ENCODE measurements at regions of chrX and their contacts with region 1.

Region 1: DNA sequence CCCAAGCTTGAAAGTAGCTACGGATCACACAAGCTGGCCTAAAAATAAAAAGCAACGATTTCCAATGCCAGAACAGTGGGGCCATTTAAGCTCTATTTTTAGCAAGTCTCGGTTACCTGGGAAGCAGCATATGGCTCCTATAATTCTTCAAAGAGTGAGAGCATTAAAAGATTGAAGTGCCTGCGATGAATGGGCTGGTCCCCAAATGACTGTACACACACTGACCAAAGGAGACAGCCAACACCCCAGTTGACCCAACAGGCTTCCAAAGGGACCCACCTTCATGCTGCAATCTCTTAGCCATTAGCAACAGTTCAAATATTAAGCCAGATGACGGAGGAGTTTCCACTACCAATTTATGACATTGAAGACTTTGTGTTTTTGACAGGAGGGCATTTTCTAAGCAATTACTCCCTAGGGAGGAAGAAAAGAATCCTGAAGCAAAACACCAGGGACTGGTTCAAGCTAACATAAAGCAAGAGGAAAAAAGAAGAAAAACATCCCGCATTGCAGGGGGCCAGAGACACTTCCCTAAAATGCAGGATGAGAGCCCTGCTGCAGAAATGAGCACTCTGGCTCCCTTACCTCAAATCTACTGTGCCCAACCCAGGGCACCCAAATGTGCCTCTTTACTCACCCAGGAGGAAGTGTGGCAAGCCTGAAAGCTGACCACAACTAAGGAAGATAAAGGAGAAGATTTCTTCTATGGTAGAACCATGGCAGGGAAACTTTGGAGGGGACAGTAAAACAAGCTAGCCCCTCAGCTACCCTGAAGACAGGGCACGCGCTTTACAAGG is 21.6 kb downstream of the SH3KBP1 start:
- DNase-seq: no peak
- H3K4me3 Mint-ChIP-seq: peak overlapping the region; percentile 40
- H3K27ac Mint-ChIP-seq: peak overlapping the region; percentile 45
- H3K4me1 Mint-ChIP-seq: peaks cover 40% of the 10 kb centered on the region
- H3K27me3 Mint-ChIP-seq: no peaks in the 10 kb centered on the region

Region 2: DNA sequence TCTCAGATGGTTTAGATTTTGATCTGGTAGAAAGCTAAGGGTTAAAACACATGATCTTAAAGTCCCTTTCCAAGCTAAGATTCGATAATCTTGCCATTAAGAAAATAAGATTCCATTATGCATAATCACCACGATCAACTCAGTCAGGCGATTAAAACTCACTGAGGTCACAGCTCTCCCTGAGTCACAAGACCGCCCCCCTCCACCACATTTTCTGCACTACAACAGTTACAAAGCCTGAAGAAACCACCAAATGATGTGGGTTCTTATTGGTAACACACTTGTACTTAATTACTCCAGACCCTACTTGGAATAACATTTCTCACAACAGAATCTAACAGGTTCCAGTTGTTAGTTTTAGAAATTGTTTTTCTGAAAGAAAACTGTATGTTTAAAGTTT is 41.2 kb before region 1 on chrX:
- intact Hi-C with region 1: loop called (anchors 5 kb)
- DNase-seq: no peak
- H3K4me3 Mint-ChIP-seq: no peak overlapping the region
- H3K27ac Mint-ChIP-seq: no peak overlapping the region
- H3K4me1 Mint-ChIP-seq: peaks cover 20% of the 10 kb centered on the region
- H3K27me3 Mint-ChIP-seq: no peaks in the 10 kb centered on the region

Region 3: GRCh38 chrX:19956923-19957322 is 91.2 kb after region 1 on chrX:
- intact Hi-C with region 1: no loop called
- DNase-seq: no peak
- H3K4me3 Mint-ChIP-seq: no peak overlapping the region
- H3K27ac Mint-ChIP-seq: no peak overlapping the region
- H3K4me1 Mint-ChIP-seq: peaks cover 4% of the 10 kb centered on the region
- H3K27me3 Mint-ChIP-seq: no peaks in the 10 kb centered on the region